Adrenal gland (tissue), 19 donors: ENCODE measurements at regions of chr20 and their contacts with region 1.

Region 1: GRCh38 chr20:25399037-25399430 is 8.4 kb upstream of the ABHD12 start:
- DNase-seq: peak; percentile 27 to 82 (median 36)
- H3K4me3 ChIP-seq: no peak overlapping the region
- H3K27ac ChIP-seq: no peak overlapping the region
- H3K4me1 ChIP-seq: no peaks in the 10 kb centered on the region
- H3K27me3 ChIP-seq: no peaks in the 10 kb centered on the region
- CTCF ChIP-seq: peak; percentile 30 to 78 (median 66)
- POLR2A ChIP-seq: no peak

Region 2: DNA sequence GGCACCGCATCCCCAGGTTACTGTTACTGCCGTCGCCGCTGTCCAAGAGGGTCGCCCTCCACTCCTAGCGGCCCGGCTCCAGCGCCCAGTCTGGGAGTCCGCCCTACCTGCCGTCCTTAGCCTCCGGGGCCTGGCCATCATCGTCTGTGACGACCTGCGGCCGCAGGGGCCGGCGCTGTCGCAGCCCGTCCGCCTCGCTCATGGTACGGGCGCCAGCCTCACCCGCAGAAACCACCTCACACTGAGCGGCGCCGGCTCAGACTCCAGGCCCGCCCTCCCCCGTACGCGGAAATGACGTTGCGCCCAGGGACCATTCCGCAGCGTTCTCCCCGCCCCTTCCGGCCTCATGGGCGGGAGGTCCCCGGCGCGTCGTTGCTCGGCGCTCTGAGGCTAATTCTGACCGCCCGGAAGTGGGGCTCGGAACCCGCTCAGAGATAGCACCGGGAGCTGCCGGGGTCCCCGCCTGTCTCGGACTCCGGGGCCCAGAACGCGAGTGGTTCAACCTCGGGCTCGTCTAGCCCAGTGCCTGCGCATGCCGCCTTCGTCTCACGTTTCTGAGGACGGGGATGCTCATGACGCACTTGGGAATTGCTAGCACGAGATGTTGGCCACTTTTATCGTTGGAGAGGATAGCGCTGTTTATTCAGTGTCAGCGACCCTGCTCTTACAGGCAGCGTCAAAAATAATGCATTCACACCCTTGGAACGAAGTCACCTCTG is 406.4 kb before region 1 on chr20 and contains the start of gene APMAP:
- intact Hi-C with region 1: loop called in 1 of 2 experiments (anchors 5 kb)
- DNase-seq: peak; percentile 94 to 97 (median 97)
- H3K4me3 ChIP-seq: peak within 1 kb of the TSS; percentile 52 to 91 (median 82)
- H3K27ac ChIP-seq: peak within 1 kb of the TSS; percentile 33 to 99 (median 88)
- H3K4me1 ChIP-seq: peaks cover 0 to 24% of the 10 kb centered on the region in 2 donors
- H3K27me3 ChIP-seq: no peaks in the 10 kb centered on the region
- CTCF ChIP-seq: peak in 1 of 6 experiments; percentile 1
- POLR2A ChIP-seq: peak; percentile 90 to 96
- total RNA-seq, gene APMAP: 45.8 to 110 (median 74.6) TPM

Region 3: GRCh38 chr20:25204550-25205276 is 194.3 kb before region 1 on chr20:
- intact Hi-C with region 1: no loop called
- DNase-seq: peak in 2 of 7 donors; percentile 18 to 51
- H3K4me3 ChIP-seq: no peak overlapping the region
- H3K27ac ChIP-seq: peak overlapping the region in 2 of 5 donors; percentile 15 to 66
- H3K4me1 ChIP-seq: peaks cover 4 to 21% of the 10 kb centered on the region in 2 donors
- H3K27me3 ChIP-seq: no peaks in the 10 kb centered on the region
- CTCF ChIP-seq: no peak
- POLR2A ChIP-seq: no peak

Region 4: GRCh38 chr20:25294459-25295385 is 104.3 kb before region 1 on chr20:
- intact Hi-C with region 1: loop called (anchors 5 to 10 kb)
- DNase-seq: peak in 2 of 7 donors; percentile 48 to 71
- H3K4me3 ChIP-seq: no peak overlapping the region
- H3K27ac ChIP-seq: peak overlapping the region in 4 of 5 donors; percentile 65 to 88 (median 79)
- H3K4me1 ChIP-seq: peaks cover 25 to 28% of the 10 kb centered on the region in 2 donors
- H3K27me3 ChIP-seq: no peaks in the 10 kb centered on the region
- CTCF ChIP-seq: peak; percentile 40 to 68 (median 58)
- POLR2A ChIP-seq: no peak